Activated CD4-positive, alpha-beta T cell treated with anti-CD3 and anti-CD28 coated beads for 36 hours (primary cell): ENCODE measurements at regions of chr15 and their contacts with region 1.

Region 1: DNA sequence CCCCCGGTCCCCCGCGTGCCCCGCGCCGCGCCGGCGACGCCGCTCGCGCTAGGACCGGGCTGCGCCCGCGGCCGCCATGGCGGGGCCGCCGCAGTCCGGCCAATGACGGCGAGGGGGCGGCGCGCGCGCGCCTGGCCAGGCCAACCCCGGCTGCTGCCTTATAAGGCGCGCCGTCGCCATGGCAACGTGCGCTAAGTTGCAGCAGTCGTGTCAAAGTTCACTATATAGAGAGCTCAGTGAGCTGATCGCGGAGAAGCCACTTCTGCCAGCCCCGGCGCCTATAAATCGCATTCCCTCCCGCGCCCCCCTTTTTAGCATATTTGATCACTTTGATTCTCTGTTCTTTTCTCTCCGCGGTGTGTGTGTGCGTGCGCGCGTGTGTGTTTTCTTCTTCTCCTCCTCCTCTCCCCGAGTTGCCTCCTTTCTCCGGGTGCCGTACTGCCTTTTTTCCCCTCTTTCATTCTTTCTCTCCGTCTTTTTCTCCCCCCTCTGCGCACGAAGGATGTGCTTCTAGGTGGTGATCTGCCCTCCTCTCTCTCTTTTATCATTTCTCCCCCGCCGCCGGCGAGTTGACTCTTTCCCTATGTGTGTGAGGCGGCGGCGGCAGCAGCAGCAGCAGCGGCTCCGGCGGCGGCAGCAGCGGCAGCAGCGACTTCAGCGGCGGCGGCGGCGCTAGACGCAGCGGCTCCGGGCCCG is at the start of gene NR2F2:
- DNase-seq: peak; percentile 79
- ATAC-seq: peak; percentile 93
- H3K4me3 Mint-ChIP-seq: peak within 1 kb of the TSS; percentile 76
- H3K27ac Mint-ChIP-seq: no peak within 1 kb of the TSS
- H3K4me1 Mint-ChIP-seq: peaks cover 25% of the 10 kb centered on the region
- H3K27me3 Mint-ChIP-seq: peaks cover 72% of the 10 kb centered on the region
- total RNA-seq, gene NR2F2: not detected

Region 2: DNA sequence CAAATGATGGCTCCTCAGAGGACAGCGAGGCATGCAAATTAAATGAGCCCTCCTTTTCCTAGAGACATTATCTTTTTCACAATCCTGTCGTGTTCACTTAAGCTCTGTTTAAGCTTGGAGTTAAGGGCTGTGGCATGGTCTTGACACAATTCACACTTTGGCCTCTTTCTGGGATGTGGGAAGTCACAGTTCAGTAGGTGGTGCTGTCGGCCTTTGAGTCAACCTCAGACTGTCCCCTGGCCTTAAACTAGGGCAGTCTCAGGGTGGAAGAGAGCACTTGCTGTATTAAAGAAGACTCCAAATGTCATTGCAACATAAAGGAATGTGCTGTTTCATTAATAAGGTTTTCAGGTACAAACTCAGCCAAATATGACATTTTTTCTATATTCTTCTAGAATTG is 1748.2 kb before region 1 on chr15:
- CTCF ChIA-PET with region 1: no interaction called
- POLR2A ChIA-PET with region 1: no interaction called
- intact Hi-C with region 1: loop called in 1 of 2 experiments (anchors 10 kb)
- DNase-seq: peak; percentile 62
- ATAC-seq: peak; percentile 57
- H3K4me3 Mint-ChIP-seq: no peak overlapping the region
- H3K27ac Mint-ChIP-seq: no peak overlapping the region
- H3K4me1 Mint-ChIP-seq: peaks cover 25% of the 10 kb centered on the region
- H3K27me3 Mint-ChIP-seq: peaks cover 68% of the 10 kb centered on the region

Region 3: GRCh38 chr15:96345560-96346399 is 15.2 kb after region 1 on chr15:
- CTCF ChIA-PET with region 1: no interaction called
- POLR2A ChIA-PET with region 1: no interaction called
- intact Hi-C with region 1: loop called (anchors 2 kb)
- DNase-seq: no peak
- ATAC-seq: no peak
- H3K4me3 Mint-ChIP-seq: no peak overlapping the region
- H3K27ac Mint-ChIP-seq: no peak overlapping the region
- H3K4me1 Mint-ChIP-seq: peaks cover 3% of the 10 kb centered on the region
- H3K27me3 Mint-ChIP-seq: peaks cover 86% of the 10 kb centered on the region

Region 4: GRCh38 chr15:96356494-96357455 is 26.2 kb after region 1 on chr15:
- CTCF ChIA-PET with region 1: interaction called, 5 read pairs
- POLR2A ChIA-PET with region 1: no interaction called
- intact Hi-C with region 1: loop called (anchors 1 to 5 kb)
- DNase-seq: peak; percentile 88
- ATAC-seq: peak; percentile 87
- H3K4me3 Mint-ChIP-seq: peak overlapping the region; percentile 71
- H3K27ac Mint-ChIP-seq: no peak overlapping the region
- H3K4me1 Mint-ChIP-seq: peaks cover 20% of the 10 kb centered on the region
- H3K27me3 Mint-ChIP-seq: peaks cover 65% of the 10 kb centered on the region

Region 5: GRCh38 chr15:97234851-97235610 is 904.4 kb after region 1 on chr15:
- CTCF ChIA-PET with region 1: no interaction called
- POLR2A ChIA-PET with region 1: no interaction called
- intact Hi-C with region 1: loop called in 1 of 2 experiments (anchors 5 kb)
- DNase-seq: peak; percentile 49
- ATAC-seq: no peak
- H3K4me3 Mint-ChIP-seq: no peak overlapping the region
- H3K27ac Mint-ChIP-seq: no peak overlapping the region
- H3K4me1 Mint-ChIP-seq: no peaks in the 10 kb centered on the region
- H3K27me3 Mint-ChIP-seq: peaks cover 8% of the 10 kb centered on the region

Region 6: GRCh38 chr15:97759363-97759762 is 1428.8 kb after region 1 on chr15:
- CTCF ChIA-PET with region 1: no interaction called
- POLR2A ChIA-PET with region 1: no interaction called
- intact Hi-C with region 1: loop called in 1 of 2 experiments (anchors 10 kb)
- DNase-seq: no peak
- ATAC-seq: no peak
- H3K4me3 Mint-ChIP-seq: no peak overlapping the region
- H3K27ac Mint-ChIP-seq: no peak overlapping the region
- H3K4me1 Mint-ChIP-seq: no peaks in the 10 kb centered on the region
- H3K27me3 Mint-ChIP-seq: peaks cover 5% of the 10 kb centered on the region